ENCODE measurements at regions of chr1 and their contacts with region 1.

Region 1: GRCh38 chr1:22416555-22417454 is 34.8 kb upstream of the ZBTB40 start:
- DNase-seq: peak; percentile 83
- ATAC-seq: peak; percentile 79
- H3K4me3 Mint-ChIP-seq: no peak overlapping the region
- H3K27ac Mint-ChIP-seq: no peak overlapping the region
- H3K4me1 Mint-ChIP-seq: peaks cover 4% of the 10 kb centered on the region
- H3K27me3 Mint-ChIP-seq: peaks cover 29% of the 10 kb centered on the region

Region 2: GRCh38 chr1:22131875-22132486 is 284.8 kb before region 1 on chr1:
- CTCF ChIA-PET with region 1: interaction called, 13 read pairs
- POLR2A ChIA-PET with region 1: no interaction called
- DNase-seq: peak; percentile 62
- ATAC-seq: peak; percentile 73
- H3K4me3 Mint-ChIP-seq: no peak overlapping the region
- H3K27ac Mint-ChIP-seq: no peak overlapping the region
- H3K4me1 Mint-ChIP-seq: no peaks in the 10 kb centered on the region
- H3K27me3 Mint-ChIP-seq: peaks cover 4% of the 10 kb centered on the region

Region 3: DNA sequence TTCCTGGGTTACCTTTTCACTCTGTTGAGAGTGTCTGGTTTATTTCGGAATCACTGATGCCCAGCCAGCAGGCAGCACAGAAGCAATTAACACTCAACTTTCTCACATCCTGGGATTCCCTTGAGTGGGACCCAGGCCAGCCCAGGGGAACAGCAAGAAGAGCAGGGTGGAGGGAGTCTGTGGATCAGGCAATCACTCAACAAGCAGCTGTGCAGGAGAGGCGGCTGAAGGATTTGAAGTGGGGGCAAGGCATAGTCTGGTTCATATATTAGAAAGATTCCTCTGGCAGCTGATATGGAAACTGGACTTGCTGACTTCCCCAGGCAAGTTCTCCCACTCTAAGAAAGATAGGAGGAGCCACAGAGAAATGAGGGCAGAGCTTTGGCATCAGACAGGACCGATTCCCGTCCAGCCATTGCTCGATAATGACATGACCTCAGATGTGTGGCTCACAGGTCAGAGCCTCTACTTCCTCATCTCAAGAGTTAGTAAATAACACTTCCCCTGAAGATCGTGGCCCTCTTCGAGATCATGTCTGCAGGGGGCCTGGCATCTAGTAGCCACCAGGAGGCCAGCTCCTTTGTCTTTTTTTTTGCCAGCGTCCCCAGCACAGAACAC is 158.8 kb after region 1 on chr1:
- CTCF ChIA-PET with region 1: no interaction called
- POLR2A ChIA-PET with region 1: no interaction called
- DNase-seq: no peak
- ATAC-seq: no peak
- H3K4me3 Mint-ChIP-seq: no peak overlapping the region
- H3K27ac Mint-ChIP-seq: no peak overlapping the region
- H3K4me1 Mint-ChIP-seq: no peaks in the 10 kb centered on the region
- H3K27me3 Mint-ChIP-seq: peaks cover 3% of the 10 kb centered on the region

Region 4: GRCh38 chr1:22641906-22642636 is 225.3 kb after region 1 on chr1:
- CTCF ChIA-PET with region 1: interaction called, 24 read pairs
- POLR2A ChIA-PET with region 1: no interaction called
- DNase-seq: peak; percentile 76
- ATAC-seq: peak; percentile 92
- H3K4me3 Mint-ChIP-seq: no peak overlapping the region
- H3K27ac Mint-ChIP-seq: no peak overlapping the region
- H3K4me1 Mint-ChIP-seq: no peaks in the 10 kb centered on the region
- H3K27me3 Mint-ChIP-seq: no peaks in the 10 kb centered on the region

Measured in activated CD8-positive, alpha-beta T cell treated with anti-CD3 and anti-CD28 coated beads, Interleukin-2, amount 10 ng/mL, durations not matched to agents 7 days and 5 days (primary cell).